PC-3 (cell line): ENCODE measurements at regions of chr15 and their contacts with region 1.

Region 1: DNA sequence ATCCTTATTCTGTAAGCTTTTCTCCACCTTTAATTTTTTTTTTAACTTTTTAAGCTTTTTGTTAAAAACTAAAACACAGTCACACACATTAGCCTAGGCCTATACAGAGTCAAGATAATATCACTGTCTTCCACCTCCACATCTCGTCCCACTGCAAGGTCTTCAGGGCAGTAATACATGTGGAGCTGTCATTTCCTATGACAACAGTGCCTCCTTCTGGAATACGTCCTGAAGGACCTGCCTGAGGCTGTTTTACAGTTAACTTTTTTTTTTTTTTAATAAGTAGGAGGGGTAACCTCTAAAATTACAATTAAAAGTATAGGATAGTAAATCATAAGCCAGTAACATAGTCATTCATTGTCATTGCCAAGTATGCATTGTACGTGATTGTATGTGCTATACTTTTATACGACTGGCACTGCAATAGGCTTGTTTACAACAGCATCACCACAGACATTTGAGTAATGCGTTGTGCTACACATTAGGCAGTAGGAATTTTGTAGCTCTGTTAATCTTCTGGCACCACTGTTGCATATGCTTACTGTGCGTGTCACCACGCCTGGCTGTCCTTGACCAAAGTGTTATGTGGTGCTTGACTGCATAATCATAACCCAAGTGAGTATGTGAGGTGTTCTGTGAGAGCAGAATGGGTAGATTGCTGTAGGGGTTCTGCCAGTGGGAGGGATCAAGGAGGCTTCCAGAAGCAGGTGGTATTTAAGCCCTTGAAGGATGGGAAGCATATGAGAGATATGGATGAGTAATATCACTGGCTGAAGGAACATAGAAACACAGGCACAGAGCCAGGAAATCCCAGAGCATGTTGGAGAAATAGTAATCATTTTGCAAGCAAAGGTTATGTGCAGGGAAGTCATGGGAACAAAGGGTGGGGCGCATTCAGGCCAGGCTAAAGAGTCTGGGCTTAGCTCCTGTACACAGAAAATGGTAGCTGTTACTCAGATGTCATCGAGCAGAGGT is 18.3 kb downstream of the FBXO22 start:
- DNase-seq: peak; percentile 50
- ATAC-seq: peak; percentile 50
- H3K4me3 ChIP-seq: no peak overlapping the region
- H3K27ac ChIP-seq: no peak overlapping the region
- H3K4me1 ChIP-seq: peaks cover 17% of the 10 kb centered on the region
- H3K27me3 ChIP-seq: no peaks in the 10 kb centered on the region
- CTCF ChIP-seq: peak; percentile 65

Region 2: GRCh38 chr15:75723847-75724660 is 198.0 kb before region 1 on chr15:
- CTCF ChIA-PET with region 1: no interaction called
- POLR2A ChIA-PET with region 1: no interaction called
- intact Hi-C with region 1: loop called (anchors 10 kb)
- DNase-seq: peak; percentile 27
- ATAC-seq: peak; percentile 53; the same call in 1 of the 2 replicates
- H3K4me3 ChIP-seq: no peak overlapping the region
- H3K27ac ChIP-seq: no peak overlapping the region
- H3K4me1 ChIP-seq: peaks cover 8% of the 10 kb centered on the region; the same call in 1 of the 2 replicates
- H3K27me3 ChIP-seq: no peaks in the 10 kb centered on the region
- CTCF ChIP-seq: no peak

Region 3: GRCh38 chr15:75809986-75810750 is 111.8 kb before region 1 on chr15:
- CTCF ChIA-PET with region 1: interaction called, 4 read pairs
- POLR2A ChIA-PET with region 1: no interaction called
- intact Hi-C with region 1: loop called (anchors 5 kb)
- DNase-seq: peak; percentile 57
- ATAC-seq: peak; percentile 79
- H3K4me3 ChIP-seq: no peak overlapping the region
- H3K27ac ChIP-seq: no peak overlapping the region
- H3K4me1 ChIP-seq: no peaks in the 10 kb centered on the region
- H3K27me3 ChIP-seq: no peaks in the 10 kb centered on the region
- CTCF ChIP-seq: peak; percentile 66

Region 4: DNA sequence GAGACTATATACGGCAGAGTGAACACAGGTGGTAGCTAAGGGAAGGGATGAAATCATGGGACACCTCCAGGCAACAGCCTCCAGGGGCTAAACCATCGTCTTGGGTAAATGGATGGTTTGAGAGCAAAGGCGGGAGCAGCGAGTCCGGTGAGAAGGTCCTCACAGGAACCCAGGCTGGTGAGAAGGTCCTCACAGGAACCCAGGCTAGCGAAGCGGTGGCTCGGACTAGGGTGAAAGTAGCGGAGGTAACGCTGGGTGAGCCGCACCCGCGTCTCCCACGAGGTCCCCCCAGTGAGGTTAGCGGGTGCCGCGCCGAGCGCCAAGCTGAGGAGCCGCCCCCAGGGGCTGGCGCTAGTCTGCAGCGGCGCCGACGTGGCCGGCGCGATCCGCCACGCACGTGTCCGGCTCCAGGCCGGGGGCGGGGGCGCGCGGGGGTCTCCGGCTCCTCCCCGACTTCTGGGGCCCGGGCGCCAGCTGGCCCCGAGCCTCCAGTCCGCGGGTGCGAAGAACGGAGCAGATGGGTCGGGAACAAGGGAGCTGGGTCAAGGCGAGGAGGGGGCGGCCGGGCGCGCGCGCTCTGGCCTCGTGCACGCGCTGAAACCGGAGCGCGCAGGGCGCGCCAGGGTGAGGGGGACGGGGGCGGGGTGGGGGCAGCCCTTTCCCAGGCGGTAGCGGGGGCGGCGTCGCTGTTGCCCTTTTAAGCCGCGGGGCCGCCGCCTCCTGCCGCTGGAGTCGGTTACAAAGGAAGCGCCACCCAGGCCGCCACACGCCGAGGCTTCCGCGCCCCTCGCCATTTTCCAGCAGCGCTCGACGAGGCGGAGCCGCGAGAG is 79.1 kb before region 1 on chr15 and contains the start of gene UBE2Q2:
- CTCF ChIA-PET with region 1: no interaction called
- POLR2A ChIA-PET with region 1: no interaction called
- intact Hi-C with region 1: loop called (anchors 5 kb)
- DNase-seq: peak; percentile 67
- ATAC-seq: peak; percentile 58
- H3K4me3 ChIP-seq: peak within 1 kb of the TSS; percentile 91
- H3K27ac ChIP-seq: peak within 1 kb of the TSS; percentile 42; the same call in 1 of the 2 replicates
- H3K4me1 ChIP-seq: peaks cover 12% of the 10 kb centered on the region
- H3K27me3 ChIP-seq: no peaks in the 10 kb centered on the region
- CTCF ChIP-seq: no peak
- total RNA-seq, gene UBE2Q2: 18.5 and 20.3 TPM in 2 replicates

Region 5: DNA sequence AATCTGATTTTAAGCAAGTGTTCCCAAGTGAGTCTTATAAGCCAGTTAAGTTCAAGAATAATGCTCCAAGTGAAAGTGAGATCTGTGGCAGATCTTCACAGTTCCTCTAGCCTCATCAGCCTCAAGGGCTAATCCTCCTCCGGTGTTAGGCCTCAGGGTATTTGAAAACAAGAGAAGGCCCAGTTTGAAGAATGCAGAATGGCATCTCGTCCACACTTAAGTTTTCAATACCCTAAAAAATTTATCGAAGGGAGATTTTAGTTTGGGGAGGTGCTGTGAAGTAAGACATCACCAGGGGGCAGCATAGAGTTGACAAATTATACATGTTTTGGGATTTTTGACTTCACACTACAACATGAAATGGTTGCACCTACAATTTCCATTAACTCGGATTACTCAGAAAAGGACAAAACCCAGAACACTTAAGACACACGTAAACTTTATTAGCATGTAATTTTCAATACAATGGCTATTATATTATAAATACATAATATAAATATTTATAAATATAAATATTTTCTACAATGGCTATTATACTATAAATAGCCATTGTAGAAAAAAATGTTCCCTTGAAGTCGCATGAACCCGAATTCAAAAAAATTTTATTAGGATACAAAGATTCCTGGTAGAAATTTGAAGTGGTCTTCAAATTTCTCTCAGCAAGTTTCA is 135.4 kb after region 1 on chr15:
- CTCF ChIA-PET with region 1: no interaction called
- POLR2A ChIA-PET with region 1: no interaction called
- intact Hi-C with region 1: loop called (anchors 10 kb)
- DNase-seq: peak; percentile 66
- ATAC-seq: no peak
- H3K4me3 ChIP-seq: peak overlapping the region; percentile 54
- H3K27ac ChIP-seq: no peak overlapping the region
- H3K4me1 ChIP-seq: peaks cover 7% of the 10 kb centered on the region; the same call in 1 of the 2 replicates
- H3K27me3 ChIP-seq: peaks cover 33% of the 10 kb centered on the region
- CTCF ChIP-seq: peak; percentile 75

Region 6: GRCh38 chr15:76139368-76140073 is 217.5 kb after region 1 on chr15:
- CTCF ChIA-PET with region 1: no interaction called
- POLR2A ChIA-PET with region 1: no interaction called
- intact Hi-C with region 1: loop called (anchors 10 kb)
- DNase-seq: peak; percentile 86
- ATAC-seq: peak; percentile 80
- H3K4me3 ChIP-seq: no peak overlapping the region
- H3K27ac ChIP-seq: no peak overlapping the region
- H3K4me1 ChIP-seq: no peaks in the 10 kb centered on the region
- H3K27me3 ChIP-seq: 0 out of 2 replicates have a peak, but pooled peaks cover 25% of the 10 kb centered on the region
- CTCF ChIP-seq: peak; percentile 89